ENCODE measurements at regions of chr6 and their contacts with region 1.

Region 1: DNA sequence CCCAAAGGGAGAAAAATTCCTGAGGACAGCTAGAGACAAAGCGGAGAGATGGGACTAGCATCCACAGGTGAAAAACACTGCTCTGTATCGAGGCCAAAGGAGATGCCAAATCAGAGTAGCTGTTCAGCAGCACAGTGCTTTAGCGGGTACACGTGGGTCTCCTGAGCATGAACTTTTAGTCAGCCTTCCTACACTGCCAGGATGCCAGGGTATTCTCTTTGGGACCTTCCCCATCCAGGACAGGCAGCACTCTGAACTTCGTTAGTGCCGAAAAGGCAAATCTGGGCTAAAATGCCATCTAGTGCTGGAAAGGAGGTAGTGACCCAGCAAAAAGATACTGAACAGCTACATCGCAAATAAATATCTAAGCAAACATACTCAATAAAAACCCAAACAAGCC is 64.9 kb downstream of the C6orf58 start:
- DNase-seq: no peak
- H3K4me3 ChIP-seq: no peak overlapping the region
- H3K27ac ChIP-seq: no peak overlapping the region
- H3K4me1 ChIP-seq: no peaks in the 10 kb centered on the region
- H3K27me3 ChIP-seq: no peaks in the 10 kb centered on the region
- CTCF ChIP-seq: peak in 2 of 3 donors; percentile 15 to 26
- POLR2A ChIP-seq: no peak

Region 2: GRCh38 chr6:129543981-129544380 is 1902.1 kb after region 1 on chr6:
- intact Hi-C with region 1: loop called (anchors 10 kb)
- DNase-seq: no peak
- H3K4me3 ChIP-seq: no peak overlapping the region
- H3K27ac ChIP-seq: no peak overlapping the region
- H3K4me1 ChIP-seq: no peaks in the 10 kb centered on the region
- H3K27me3 ChIP-seq: no peaks in the 10 kb centered on the region
- CTCF ChIP-seq: no peak
- POLR2A ChIP-seq: no peak